RWPE1 (cell line): ENCODE measurements at regions of chr10 and their contacts with region 1.

Region 1: GRCh38 chr10:74176380-74177139 is 25.5 kb downstream of the ADK start:
- DNase-seq: peak; percentile 95
- H3K27ac ChIP-seq: peak overlapping the region; percentile 95
- CTCF ChIP-seq: no peak

Region 2: GRCh38 chr10:74234569-74234968 is 58.0 kb after region 1 on chr10:
- CTCF ChIA-PET with region 1: no interaction called
- POLR2A ChIA-PET with region 1: interaction called, 11 read pairs
- DNase-seq: peak; percentile 29
- H3K27ac ChIP-seq: no peak overlapping the region
- CTCF ChIP-seq: peak; percentile 61

Region 3: GRCh38 chr10:74249865-74250264 is 73.3 kb after region 1 on chr10:
- CTCF ChIA-PET with region 1: no interaction called
- POLR2A ChIA-PET with region 1: no interaction called
- DNase-seq: no peak
- H3K27ac ChIP-seq: no peak overlapping the region
- CTCF ChIP-seq: no peak